ENCODE measurements at regions of chr14 and their contacts with region 1.

Region 1: DNA sequence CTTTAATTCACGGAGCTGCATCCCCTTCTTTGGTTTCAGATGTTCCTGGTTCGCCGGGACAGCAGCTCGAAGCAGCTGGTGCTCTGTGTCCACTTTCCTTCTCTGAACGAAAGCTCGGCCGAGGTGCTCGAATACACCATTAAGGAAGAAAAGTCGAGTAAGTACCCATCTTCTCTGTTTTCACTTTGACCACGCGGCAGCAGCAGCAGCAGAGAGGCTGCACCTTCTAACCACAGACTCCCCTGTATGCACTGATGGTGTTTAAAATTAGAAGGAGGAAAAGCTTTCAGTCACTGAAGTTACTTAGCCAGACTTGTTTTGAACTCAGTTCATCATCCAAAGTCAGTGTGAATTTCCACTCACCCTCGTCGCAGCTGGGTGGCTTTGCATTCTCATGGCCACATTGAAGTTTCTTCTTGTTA is 63.8 kb downstream of the RIN3 start:
- DNase-seq: peak; percentile 54
- H3K4me3 Mint-ChIP-seq: peak overlapping the region; percentile 58
- H3K27ac Mint-ChIP-seq: peak overlapping the region; percentile 90
- H3K4me1 Mint-ChIP-seq: peaks cover 55% of the 10 kb centered on the region
- H3K27me3 Mint-ChIP-seq: peaks cover 17% of the 10 kb centered on the region

Region 2: GRCh38 chr14:92373336-92373735 is 204.0 kb before region 1 on chr14:
- CTCF ChIA-PET with region 1: no interaction called
- POLR2A ChIA-PET with region 1: no interaction called
- DNase-seq: no peak
- H3K4me3 Mint-ChIP-seq: no peak overlapping the region
- H3K27ac Mint-ChIP-seq: no peak overlapping the region
- H3K4me1 Mint-ChIP-seq: no peaks in the 10 kb centered on the region
- H3K27me3 Mint-ChIP-seq: peaks cover under 1% of the 10 kb centered on the region

Region 3: DNA sequence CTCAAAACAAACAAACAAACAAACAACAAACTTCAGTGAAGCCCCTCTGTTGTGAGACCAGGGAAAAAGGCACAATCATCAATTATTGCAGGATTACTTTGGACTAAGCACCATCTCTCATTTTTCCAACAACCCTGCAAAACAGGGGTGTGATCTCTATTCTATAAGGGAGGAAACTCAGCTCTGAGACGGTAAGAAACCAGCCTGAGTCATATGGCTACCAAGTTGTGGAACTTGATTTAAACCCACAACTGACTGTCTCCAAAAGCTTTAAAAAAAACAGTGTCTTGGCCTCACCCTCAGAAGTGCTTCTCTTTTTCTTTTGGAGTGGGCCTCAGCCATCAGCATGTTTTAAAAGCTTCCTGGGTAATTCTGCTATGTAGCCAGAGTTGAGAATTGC is 14.0 kb before region 1 on chr14:
- CTCF ChIA-PET with region 1: interaction called, 10 read pairs
- POLR2A ChIA-PET with region 1: interaction called, 4 read pairs
- DNase-seq: peak; percentile 38
- H3K4me3 Mint-ChIP-seq: no peak overlapping the region
- H3K27ac Mint-ChIP-seq: peak overlapping the region; percentile 64
- H3K4me1 Mint-ChIP-seq: peaks cover 68% of the 10 kb centered on the region
- H3K27me3 Mint-ChIP-seq: no peaks in the 10 kb centered on the region

Measured in activated CD4-positive, alpha-beta T cell treated with anti-CD3 and anti-CD28 coated beads, Interleukin-2, amount 10 ng/mL, durations not matched to agents 7 days and 5 days (primary cell).